ENCODE measurements at regions of chr19 and their contacts with region 1.

Region 1: DNA sequence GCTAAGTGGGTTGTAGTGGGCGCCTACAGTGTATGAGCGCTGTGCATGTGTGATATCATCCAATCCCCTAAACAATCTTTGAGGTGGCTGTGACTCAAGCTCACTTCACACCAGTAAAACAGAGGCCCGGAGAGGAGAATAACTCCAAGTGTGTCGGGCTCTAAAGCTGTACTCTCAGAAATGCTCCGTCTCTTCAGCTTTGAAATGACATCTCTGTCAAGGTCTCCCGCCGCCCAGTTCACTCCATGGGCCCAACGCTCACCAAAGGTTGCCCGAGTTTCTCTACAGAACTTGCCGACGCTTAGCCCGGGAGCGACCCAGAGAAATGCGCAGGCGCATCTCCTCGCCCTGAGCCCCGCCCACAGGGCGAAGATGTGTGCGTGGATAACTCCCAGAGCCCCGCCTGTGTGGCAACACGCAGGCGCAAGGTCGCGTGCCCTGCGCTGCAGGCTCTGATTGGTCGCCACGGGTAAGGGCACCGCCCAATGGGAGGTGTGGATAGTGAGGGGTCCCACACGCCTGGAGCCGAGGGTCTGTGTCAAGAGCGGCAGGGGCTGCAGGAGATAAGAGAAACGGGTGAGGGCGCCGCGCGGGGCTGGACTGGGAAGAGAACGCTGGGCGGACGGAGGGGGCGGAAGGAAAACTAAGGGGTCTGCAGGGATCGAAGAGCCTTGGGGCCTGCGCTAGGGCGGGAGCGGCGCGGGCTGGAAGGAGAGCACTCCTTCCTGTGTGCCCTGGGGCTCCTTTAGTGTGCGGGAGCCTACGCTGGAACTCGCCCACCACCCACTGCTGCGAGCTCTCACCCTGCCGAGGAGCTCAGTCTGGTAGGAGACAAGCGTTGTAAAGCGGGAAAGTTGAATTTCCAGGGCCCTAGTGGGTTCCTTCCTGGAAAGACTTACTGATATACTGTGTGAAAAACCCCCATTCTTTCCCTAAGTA is at the start of gene ZNF526:
- DNase-seq: peak; percentile 95 to 97 (median 97)
- H3K4me3 ChIP-seq: peak within 1 kb of the TSS; percentile 82 to 86
- H3K4me3 Mint-ChIP-seq: peak within 1 kb of the TSS; percentile 96 to 100 (median 98)
- H3K27ac ChIP-seq: peak within 1 kb of the TSS; percentile 77
- H3K27ac Mint-ChIP-seq: peak within 1 kb of the TSS; percentile 94 to 99 (median 98)
- H3K4me1 ChIP-seq: peaks cover 45% of the 10 kb centered on the region
- H3K4me1 Mint-ChIP-seq: peaks cover 39 to 69% (median 53%) of the 10 kb centered on the region in 4 donors
- H3K27me3 ChIP-seq: no peaks in the 10 kb centered on the region
- H3K27me3 Mint-ChIP-seq: no peaks in the 10 kb centered on the region
- total RNA-seq, gene ZNF526: 26.7 to 28.8 TPM

Region 2: DNA sequence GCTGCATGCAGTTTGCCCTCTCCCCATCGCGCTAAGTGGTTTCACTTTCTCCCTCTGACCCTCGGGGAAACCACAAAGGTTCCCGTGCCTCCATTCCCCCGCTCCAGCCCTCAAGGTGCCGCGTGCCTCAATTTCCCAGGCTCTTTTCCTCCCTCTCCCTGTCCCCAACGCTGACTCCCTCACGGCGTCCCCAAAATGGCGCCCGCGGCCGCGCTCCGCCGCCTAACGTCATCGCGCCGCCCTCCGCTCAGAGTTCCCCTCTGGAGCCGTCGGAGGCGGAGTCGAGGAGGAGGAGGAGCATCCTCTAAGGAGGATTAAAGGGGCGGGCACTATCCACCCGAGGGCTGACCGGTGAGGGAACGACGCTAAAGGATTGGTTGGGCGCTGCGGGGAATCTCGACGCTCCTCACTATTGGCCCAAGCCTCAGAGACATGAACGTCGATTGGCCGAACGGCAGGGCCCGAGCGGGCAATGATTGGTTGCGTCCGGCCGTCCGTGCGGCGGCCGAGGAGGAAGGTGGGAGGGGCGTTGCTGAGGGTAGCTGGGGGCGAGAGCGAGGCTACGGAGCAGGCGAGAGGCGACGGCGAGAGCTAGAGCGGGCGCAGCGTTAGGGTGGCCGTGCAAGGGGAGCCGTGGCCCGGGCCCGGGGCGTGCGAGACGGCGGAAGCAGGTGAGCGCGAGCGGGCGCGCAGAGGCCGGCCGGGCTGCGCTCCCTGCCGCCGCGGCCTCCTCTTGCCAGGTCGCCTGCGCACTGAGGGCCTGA is 144.3 kb before region 1 on chr19 and contains the start of gene ZNF574:
- CTCF ChIA-PET with region 1: no interaction called
- POLR2A ChIA-PET with region 1: interaction called, 3 read pairs
- intact Hi-C with region 1: loop called (anchors 1 kb)
- DNase-seq: peak; percentile 96 to 99 (median 99)
- H3K4me3 ChIP-seq: peak within 1 kb of the TSS; percentile 66 to 86
- H3K4me3 Mint-ChIP-seq: peak within 1 kb of the TSS; percentile 92 to 100 (median 98)
- H3K27ac ChIP-seq: peak within 1 kb of the TSS; percentile 95
- H3K27ac Mint-ChIP-seq: peak within 1 kb of the TSS; percentile 97 to 100 (median 100)
- H3K4me1 ChIP-seq: peaks cover 24% of the 10 kb centered on the region
- H3K4me1 Mint-ChIP-seq: peaks cover 29 to 38% (median 34%) of the 10 kb centered on the region in 4 donors
- H3K27me3 ChIP-seq: no peaks in the 10 kb centered on the region
- H3K27me3 Mint-ChIP-seq: no peaks in the 10 kb centered on the region
- total RNA-seq, gene ZNF574: 25.1 to 26.0 TPM

Region 3: DNA sequence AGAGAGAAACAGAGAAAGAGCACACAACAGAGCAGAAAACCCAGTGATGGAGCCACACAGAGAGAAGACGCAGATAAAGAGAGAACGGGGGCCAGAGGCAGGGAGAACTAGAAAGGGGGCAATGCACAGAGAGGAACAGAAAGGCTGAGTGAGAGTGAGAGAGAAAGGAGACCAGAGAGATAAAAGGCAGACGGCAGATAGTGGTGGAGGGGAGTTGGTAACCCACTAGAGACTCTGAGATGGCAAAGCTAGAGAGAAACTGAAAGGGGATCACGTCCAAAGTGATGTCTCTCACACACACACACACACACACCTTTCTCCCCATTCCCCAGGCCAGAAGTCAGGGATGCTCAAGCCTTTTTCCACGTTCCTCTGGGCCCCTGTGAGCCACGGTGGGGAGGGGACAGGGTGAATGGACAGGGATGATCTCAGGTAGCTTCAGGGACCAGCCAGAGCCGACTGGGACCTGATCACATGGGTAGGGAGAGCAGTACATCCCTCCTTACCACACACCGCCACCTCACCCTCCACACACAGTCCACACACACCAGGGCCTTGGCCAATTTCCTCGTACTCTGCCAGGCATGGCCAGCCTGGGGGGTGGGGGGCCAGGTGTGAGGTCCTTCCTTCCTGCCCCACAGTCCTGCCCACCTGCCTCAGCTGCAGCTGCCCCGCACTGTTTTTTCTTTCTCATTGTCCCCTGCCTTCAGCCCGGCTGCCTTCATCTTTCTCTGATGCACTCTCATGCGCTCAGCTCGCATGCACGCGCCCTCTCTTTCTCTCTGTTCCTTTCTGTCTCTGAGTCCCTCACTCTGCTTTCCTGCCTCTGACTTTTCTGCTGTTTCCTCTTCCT is 65.4 kb before region 1 on chr19:
- CTCF ChIA-PET with region 1: no interaction called
- POLR2A ChIA-PET with region 1: no interaction called
- intact Hi-C with region 1: no loop called
- DNase-seq: no peak
- H3K4me3 ChIP-seq: no peak overlapping the region
- H3K4me3 Mint-ChIP-seq: peak overlapping the region in 5 of 8 donors; percentile 22 to 80 (median 49)
- H3K27ac ChIP-seq: no peak overlapping the region
- H3K27ac Mint-ChIP-seq: peak overlapping the region in 6 of 7 donors; percentile 4 to 80 (median 58)
- H3K4me1 ChIP-seq: peaks cover 9% of the 10 kb centered on the region
- H3K4me1 Mint-ChIP-seq: peaks cover 11 to 19% (median 16%) of the 10 kb centered on the region in 4 donors
- H3K27me3 ChIP-seq: no peaks in the 10 kb centered on the region
- H3K27me3 Mint-ChIP-seq: peaks cover 0 to 2% of the 10 kb centered on the region in 2 donors

Region 4: GRCh38 chr19:42176990-42177685 is 42.9 kb before region 1 on chr19:
- CTCF ChIA-PET with region 1: interaction called, 5 read pairs
- POLR2A ChIA-PET with region 1: interaction called, 9 read pairs
- intact Hi-C with region 1: loop called (anchors 1 kb)
- DNase-seq: peak; percentile 75 to 79 (median 78)
- H3K4me3 ChIP-seq: peak overlapping the region in 1 of 2 donors; percentile 59
- H3K4me3 Mint-ChIP-seq: no peak overlapping the region
- H3K27ac ChIP-seq: no peak overlapping the region
- H3K27ac Mint-ChIP-seq: no peak overlapping the region
- H3K4me1 ChIP-seq: peaks cover 29% of the 10 kb centered on the region
- H3K4me1 Mint-ChIP-seq: peaks cover 10 to 29% (median 18%) of the 10 kb centered on the region in 4 donors
- H3K27me3 ChIP-seq: peaks cover 17% of the 10 kb centered on the region
- H3K27me3 Mint-ChIP-seq: peaks cover 4 to 11% of the 10 kb centered on the region in 2 donors

Region 5: GRCh38 chr19:42254989-42255765 is 35.1 kb after region 1 on chr19 and contains the start of gene ERF:
- CTCF ChIA-PET with region 1: no interaction called
- POLR2A ChIA-PET with region 1: interaction called, 3 read pairs
- intact Hi-C with region 1: loop called (anchors 1 kb)
- DNase-seq: peak; percentile 92 to 95 (median 94)
- H3K4me3 ChIP-seq: peak within 1 kb of the TSS; percentile 69 to 90
- H3K4me3 Mint-ChIP-seq: peak within 1 kb of the TSS; percentile 76 to 88 (median 82)
- H3K27ac ChIP-seq: peak within 1 kb of the TSS; percentile 93
- H3K27ac Mint-ChIP-seq: peak within 1 kb of the TSS; percentile 81 to 88 (median 86)
- H3K4me1 ChIP-seq: peaks cover 35% of the 10 kb centered on the region
- H3K4me1 Mint-ChIP-seq: peaks cover 12 to 40% (median 27%) of the 10 kb centered on the region in 4 donors
- H3K27me3 ChIP-seq: no peaks in the 10 kb centered on the region
- H3K27me3 Mint-ChIP-seq: peaks cover 3 to 4% of the 10 kb centered on the region in 2 donors
- total RNA-seq, gene ERF: 38.5 to 39.9 TPM

Region 6: GRCh38 chr19:42268704-42269477 is 48.8 kb after region 1 on chr19 and contains the start of gene CIC:
- CTCF ChIA-PET with region 1: no interaction called
- POLR2A ChIA-PET with region 1: interaction called, 3 read pairs
- intact Hi-C with region 1: loop called (anchors 1 kb)
- DNase-seq: peak; percentile 100
- H3K4me3 ChIP-seq: peak within 1 kb of the TSS; percentile 83 to 96
- H3K4me3 Mint-ChIP-seq: peak within 1 kb of the TSS in 4 of 8 donors; percentile 89 to 94 (median 92)
- H3K27ac ChIP-seq: peak within 1 kb of the TSS; percentile 99
- H3K27ac Mint-ChIP-seq: peak within 1 kb of the TSS in 4 of 7 donors; percentile 96 to 99 (median 98)
- H3K4me1 ChIP-seq: peaks cover 33% of the 10 kb centered on the region
- H3K4me1 Mint-ChIP-seq: peaks cover 0 to 29% (median 26%) of the 10 kb centered on the region in 4 donors
- H3K27me3 ChIP-seq: no peaks in the 10 kb centered on the region
- H3K27me3 Mint-ChIP-seq: no peaks in the 10 kb centered on the region
- total RNA-seq, gene CIC: 81.6 to 82.6 TPM

Measured in CD4-positive, alpha-beta memory T cell (primary cell).